PC-9 (cell line): ENCODE measurements at regions of chr7 and their contacts with region 1.

Region 1: DNA sequence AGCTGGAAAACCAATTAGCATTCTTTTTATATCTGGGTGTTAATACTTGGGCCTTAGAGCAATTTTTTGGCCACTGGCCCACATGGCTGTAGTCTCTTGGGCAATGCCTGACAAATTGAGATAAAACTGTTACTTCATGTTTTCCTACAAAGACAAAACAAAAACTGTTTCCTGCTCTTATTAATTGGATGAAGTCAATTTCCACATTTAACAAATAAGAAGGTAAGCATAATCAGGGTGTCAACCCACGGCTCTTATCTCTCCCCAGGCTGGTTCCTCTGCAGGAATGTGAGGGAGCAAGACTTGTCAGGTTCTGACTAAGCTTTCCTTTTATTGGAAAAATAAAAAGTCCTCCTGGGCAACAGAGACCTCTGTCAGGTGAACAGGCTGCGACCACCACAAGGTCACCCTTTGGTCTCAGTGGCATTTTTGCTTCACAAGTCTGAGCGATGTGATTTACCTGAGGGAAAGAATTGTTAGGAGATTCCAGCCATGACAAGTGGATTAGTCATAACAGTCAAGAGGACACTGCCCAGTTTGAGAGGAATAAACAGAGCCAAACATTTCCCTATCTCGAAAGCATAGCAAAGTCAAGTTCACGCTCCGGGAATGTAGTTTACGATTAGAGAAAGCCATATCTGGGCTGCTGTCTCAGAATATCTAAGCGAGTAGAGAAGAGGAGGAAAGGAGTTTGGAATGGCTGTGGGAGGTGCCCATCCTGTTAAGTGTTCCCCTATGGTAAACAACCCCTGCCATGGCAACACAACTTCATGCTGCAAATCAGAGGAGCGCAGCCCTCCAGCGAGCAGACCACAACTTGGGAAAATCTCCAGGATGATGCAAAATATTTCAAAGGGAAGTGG is 144.4 kb downstream of the TES start:
- DNase-seq: peak; percentile 92 to 100
- H3K4me3 ChIP-seq: peak overlapping the region; percentile 50; the same call in 1 of the 2 replicates
- H3K27ac ChIP-seq: peak overlapping the region; percentile 93
- H3K4me1 ChIP-seq: peaks cover 62% of the 10 kb centered on the region
- H3K27me3 ChIP-seq: no peaks in the 10 kb centered on the region
- CTCF ChIP-seq: no peak

Region 2: DNA sequence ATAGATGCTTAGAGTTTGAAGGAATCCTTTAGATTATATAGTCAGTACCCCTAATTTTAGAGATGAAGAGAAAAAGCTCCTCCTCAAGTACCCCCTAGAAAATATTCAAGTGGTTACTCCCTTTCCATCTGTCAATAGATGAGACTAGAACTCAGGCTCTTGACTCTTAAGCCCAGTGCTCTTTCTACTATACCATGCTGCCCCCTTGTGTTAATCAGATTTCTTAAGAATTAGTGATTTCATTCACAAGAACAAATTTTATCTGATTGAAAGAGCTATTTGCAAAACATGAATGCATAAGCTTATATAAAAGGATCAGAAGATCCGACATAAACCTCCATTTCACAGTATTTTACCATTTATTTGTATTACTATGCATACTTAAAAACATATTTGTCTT is 503.5 kb before region 1 on chr7:
- CTCF ChIA-PET with region 1: no interaction called
- POLR2A ChIA-PET with region 1: no interaction called
- intact Hi-C with region 1: no loop called
- DNase-seq: peak in 1 of 2 experiments; percentile 37
- H3K4me3 ChIP-seq: no peak overlapping the region
- H3K27ac ChIP-seq: no peak overlapping the region
- H3K4me1 ChIP-seq: no peaks in the 10 kb centered on the region
- H3K27me3 ChIP-seq: no peaks in the 10 kb centered on the region
- CTCF ChIP-seq: peak; percentile 82

Region 3: DNA sequence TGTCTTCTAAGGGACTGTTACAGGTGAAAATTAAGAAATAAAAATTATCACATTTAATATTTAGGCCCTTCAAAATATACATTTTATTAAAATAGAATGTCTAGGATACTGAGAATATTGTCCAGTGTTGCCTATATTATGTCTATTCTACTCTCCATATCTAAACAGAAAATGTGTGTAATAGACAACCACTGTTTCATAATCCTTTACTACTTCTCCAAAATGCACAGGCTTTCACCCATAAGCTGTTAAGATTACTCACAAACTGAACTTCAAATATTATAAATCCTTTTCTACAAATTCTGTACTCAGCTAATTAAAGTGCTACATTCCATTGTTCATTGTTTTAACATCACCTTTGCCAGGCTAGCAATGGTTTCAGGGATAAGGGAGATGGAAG is 267.5 kb before region 1 on chr7:
- CTCF ChIA-PET with region 1: no interaction called
- POLR2A ChIA-PET with region 1: no interaction called
- intact Hi-C with region 1: no loop called
- DNase-seq: no peak
- H3K4me3 ChIP-seq: no peak overlapping the region
- H3K27ac ChIP-seq: no peak overlapping the region
- H3K4me1 ChIP-seq: no peaks in the 10 kb centered on the region
- H3K27me3 ChIP-seq: no peaks in the 10 kb centered on the region
- CTCF ChIP-seq: no peak

Region 4: DNA sequence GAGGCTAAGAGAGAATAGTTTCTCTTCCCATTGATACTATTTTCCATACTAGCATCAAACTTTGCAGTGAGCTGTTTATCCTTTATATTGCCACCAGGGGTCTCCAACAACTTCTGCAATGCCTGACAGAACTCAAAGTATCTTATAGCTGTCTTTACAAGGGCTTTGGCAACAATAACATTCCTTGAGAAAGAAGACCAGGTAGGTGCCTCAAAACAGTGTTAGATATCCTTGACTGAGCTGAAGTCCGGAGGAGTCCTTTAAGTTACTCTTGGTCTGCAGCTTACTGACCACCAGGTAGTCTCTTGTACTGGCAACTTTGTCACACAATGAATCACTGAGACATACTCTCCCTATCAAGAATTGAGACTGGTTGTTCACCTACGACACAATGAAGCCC is 174.5 kb before region 1 on chr7:
- CTCF ChIA-PET with region 1: no interaction called
- POLR2A ChIA-PET with region 1: no interaction called
- intact Hi-C with region 1: loop called (anchors 1 kb)
- DNase-seq: peak; percentile 25 to 49
- H3K4me3 ChIP-seq: no peak overlapping the region
- H3K27ac ChIP-seq: no peak overlapping the region
- H3K4me1 ChIP-seq: peaks cover 11% of the 10 kb centered on the region; the same call in 1 of the 2 replicates
- H3K27me3 ChIP-seq: no peaks in the 10 kb centered on the region
- CTCF ChIP-seq: peak; percentile 89

Region 5: GRCh38 chr7:116271963-116272839 is 82.6 kb before region 1 on chr7:
- CTCF ChIA-PET with region 1: no interaction called
- POLR2A ChIA-PET with region 1: interaction called, 7 read pairs
- intact Hi-C with region 1: loop called (anchors 1 kb)
- DNase-seq: peak; percentile 80 to 95
- H3K4me3 ChIP-seq: peak overlapping the region; percentile 32; the same call in 1 of the 2 replicates
- H3K27ac ChIP-seq: peak overlapping the region; percentile 93
- H3K4me1 ChIP-seq: peaks cover 49% of the 10 kb centered on the region
- H3K27me3 ChIP-seq: no peaks in the 10 kb centered on the region
- CTCF ChIP-seq: no peak

Region 6: DNA sequence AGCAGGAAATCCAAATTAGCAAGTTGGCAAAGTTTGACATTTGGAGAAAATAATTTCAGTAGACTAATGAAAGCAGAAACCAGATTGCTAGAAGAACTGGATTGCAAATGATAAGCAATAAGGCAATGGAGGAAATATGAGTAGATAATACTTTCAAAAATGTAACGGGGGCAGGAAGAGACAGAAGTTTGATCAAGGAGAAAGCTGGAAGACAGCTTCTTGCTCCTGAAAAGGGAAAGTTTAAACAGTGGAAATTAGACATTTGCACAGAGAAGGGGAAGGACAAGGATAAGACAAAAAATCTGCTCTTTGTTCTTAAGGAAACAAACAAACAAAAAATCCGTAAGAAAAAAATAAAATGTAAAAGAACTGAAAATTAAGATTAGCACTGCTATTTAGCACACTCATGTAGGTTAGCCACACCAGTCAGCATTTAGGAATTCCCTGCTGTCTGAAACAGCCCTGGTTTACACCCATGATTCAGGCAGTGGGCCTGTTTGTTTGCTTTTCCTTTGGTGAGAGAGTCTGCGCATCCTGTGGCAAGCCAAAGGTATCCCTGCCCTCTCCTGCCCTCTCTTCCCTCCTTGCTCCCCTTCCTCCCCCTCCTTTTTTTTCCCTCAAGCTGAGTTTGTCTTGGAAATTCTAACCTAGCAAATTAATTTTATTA is 40.5 kb after region 1 on chr7:
- CTCF ChIA-PET with region 1: no interaction called
- POLR2A ChIA-PET with region 1: no interaction called
- intact Hi-C with region 1: loop called (anchors 1 kb)
- DNase-seq: peak; percentile 85 to 90
- H3K4me3 ChIP-seq: peak overlapping the region; percentile 37; the same call in 1 of the 2 replicates
- H3K27ac ChIP-seq: peak overlapping the region; percentile 96
- H3K4me1 ChIP-seq: peaks cover 29% of the 10 kb centered on the region
- H3K27me3 ChIP-seq: no peaks in the 10 kb centered on the region
- CTCF ChIP-seq: no peak

Region 7: DNA sequence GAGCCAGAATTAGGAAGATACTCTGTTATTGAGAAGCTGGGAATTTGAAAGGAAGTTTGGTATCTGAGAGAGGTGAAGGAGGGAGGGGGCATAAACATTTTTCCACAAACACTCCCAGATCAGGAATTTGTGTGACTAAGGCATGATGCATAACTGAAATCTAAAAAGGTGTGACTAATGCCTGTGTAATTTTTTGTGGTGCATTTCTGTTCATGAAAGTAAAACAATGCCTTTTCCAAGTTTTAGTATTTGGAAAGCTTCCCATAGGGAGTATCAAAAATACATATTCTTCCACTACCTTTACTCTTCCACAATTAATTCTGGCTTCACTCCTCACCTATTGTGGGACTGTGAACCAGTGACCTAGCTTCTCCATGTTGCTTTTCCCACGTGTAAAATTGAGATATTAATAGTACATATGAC is 88.3 kb after region 1 on chr7:
- CTCF ChIA-PET with region 1: no interaction called
- POLR2A ChIA-PET with region 1: interaction called, 10 read pairs
- intact Hi-C with region 1: loop called (anchors 1 kb)
- DNase-seq: peak; percentile 46 to 95
- H3K4me3 ChIP-seq: peak overlapping the region; percentile 65; the same call in 1 of the 2 replicates
- H3K27ac ChIP-seq: peak overlapping the region; percentile 100
- H3K4me1 ChIP-seq: peaks cover 58% of the 10 kb centered on the region
- H3K27me3 ChIP-seq: no peaks in the 10 kb centered on the region
- CTCF ChIP-seq: no peak

Region 8: DNA sequence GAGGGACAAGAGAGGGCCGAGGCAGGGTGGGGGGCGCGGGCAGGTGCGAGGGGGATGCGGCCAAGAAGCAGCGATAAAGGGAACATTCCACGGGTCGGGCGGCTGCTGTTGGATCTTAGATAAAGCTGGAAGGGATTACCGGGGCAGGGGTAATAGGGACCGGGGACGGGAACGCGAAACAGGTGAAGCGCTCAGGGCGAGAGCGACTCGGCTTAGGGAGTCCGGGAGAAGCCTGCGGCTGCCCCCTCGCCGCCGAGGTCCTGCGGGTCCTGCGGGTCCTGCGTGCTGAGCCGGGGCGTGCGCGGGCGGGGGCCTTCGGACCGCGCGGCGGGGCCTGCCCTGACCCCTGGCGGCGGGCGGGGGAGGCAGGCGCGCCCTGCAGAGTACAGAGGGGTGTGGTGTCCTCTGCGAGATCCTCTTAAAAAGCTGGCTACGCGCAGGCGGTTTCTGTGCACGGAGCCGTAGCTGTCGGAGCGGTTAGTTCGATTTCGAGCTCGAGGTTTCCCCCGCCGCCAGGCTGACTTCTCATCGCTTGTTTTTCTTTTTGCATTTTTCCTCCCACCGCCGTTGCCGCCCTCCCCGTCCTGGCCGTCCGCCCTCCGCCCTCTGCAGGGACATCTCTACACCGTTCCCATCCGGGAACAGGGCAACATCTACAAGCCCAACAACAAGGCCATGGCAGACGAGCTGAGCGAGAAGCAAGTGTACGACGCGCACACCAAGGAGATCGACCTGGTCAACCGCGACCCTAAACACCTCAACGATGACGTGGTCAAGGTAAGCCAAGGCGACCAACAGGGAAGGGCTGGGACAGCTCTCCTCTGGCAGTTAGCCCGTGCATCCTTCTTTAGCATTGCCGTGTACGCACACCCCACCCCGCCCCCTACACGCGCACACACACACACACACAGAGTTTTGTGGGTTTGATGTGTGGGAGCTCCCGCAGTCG is 171.4 kb after region 1 on chr7:
- CTCF ChIA-PET with region 1: no interaction called
- POLR2A ChIA-PET with region 1: interaction called, 5 read pairs
- intact Hi-C with region 1: loop called (anchors 1 kb)
- DNase-seq: peak; percentile 63 to 90
- H3K4me3 ChIP-seq: peak overlapping the region; percentile 97
- H3K27ac ChIP-seq: peak overlapping the region; percentile 92
- H3K4me1 ChIP-seq: peaks cover 64% of the 10 kb centered on the region
- H3K27me3 ChIP-seq: no peaks in the 10 kb centered on the region
- CTCF ChIP-seq: peak; percentile 56

Region 9: GRCh38 chr7:117127585-117128168 is 772.9 kb after region 1 on chr7:
- CTCF ChIA-PET with region 1: no interaction called
- POLR2A ChIA-PET with region 1: no interaction called
- intact Hi-C with region 1: loop called (anchors 10 kb)
- DNase-seq: peak; percentile 18 to 49
- H3K4me3 ChIP-seq: no peak overlapping the region
- H3K27ac ChIP-seq: no peak overlapping the region
- H3K4me1 ChIP-seq: peaks cover 32% of the 10 kb centered on the region
- H3K27me3 ChIP-seq: no peaks in the 10 kb centered on the region
- CTCF ChIP-seq: peak; percentile 83